ENCODE measurements at regions of chr5 and their contacts with region 1.

Region 1: GRCh38 chr5:133868946-133869518 is 99.4 kb downstream of the C5orf15 start:
- DNase-seq: peak; percentile 46 to 83 (median 72)
- ATAC-seq: peak; percentile 74
- H3K4me3 ChIP-seq: no peak overlapping the region
- H3K4me3 Mint-ChIP-seq: no peak overlapping the region
- H3K27ac ChIP-seq: no peak overlapping the region
- H3K27ac Mint-ChIP-seq: no peak overlapping the region
- H3K4me1 ChIP-seq: no peaks in the 10 kb centered on the region
- H3K4me1 Mint-ChIP-seq: peaks cover 4% of the 10 kb centered on the region
- H3K27me3 ChIP-seq: no peaks in the 10 kb centered on the region
- H3K27me3 Mint-ChIP-seq: peaks cover 15% of the 10 kb centered on the region
- CTCF ChIP-seq: peak; percentile 85

Region 2: GRCh38 chr5:133423618-133424282 is 445.3 kb before region 1 on chr5:
- CTCF ChIA-PET with region 1: interaction called, 59 read pairs
- POLR2A ChIA-PET with region 1: no interaction called
- intact Hi-C with region 1: loop called (anchors 1 kb)
- DNase-seq: peak; percentile 30 to 79 (median 67)
- ATAC-seq: peak; percentile 82
- H3K4me3 ChIP-seq: no peak overlapping the region
- H3K4me3 Mint-ChIP-seq: no peak overlapping the region
- H3K27ac ChIP-seq: no peak overlapping the region
- H3K27ac Mint-ChIP-seq: no peak overlapping the region
- H3K4me1 ChIP-seq: no peaks in the 10 kb centered on the region
- H3K4me1 Mint-ChIP-seq: peaks cover 5% of the 10 kb centered on the region
- H3K27me3 ChIP-seq: peaks cover 0 to 3% of the 10 kb centered on the region in 2 experiments
- H3K27me3 Mint-ChIP-seq: peaks cover 14% of the 10 kb centered on the region
- CTCF ChIP-seq: peak; percentile 84

Region 3: DNA sequence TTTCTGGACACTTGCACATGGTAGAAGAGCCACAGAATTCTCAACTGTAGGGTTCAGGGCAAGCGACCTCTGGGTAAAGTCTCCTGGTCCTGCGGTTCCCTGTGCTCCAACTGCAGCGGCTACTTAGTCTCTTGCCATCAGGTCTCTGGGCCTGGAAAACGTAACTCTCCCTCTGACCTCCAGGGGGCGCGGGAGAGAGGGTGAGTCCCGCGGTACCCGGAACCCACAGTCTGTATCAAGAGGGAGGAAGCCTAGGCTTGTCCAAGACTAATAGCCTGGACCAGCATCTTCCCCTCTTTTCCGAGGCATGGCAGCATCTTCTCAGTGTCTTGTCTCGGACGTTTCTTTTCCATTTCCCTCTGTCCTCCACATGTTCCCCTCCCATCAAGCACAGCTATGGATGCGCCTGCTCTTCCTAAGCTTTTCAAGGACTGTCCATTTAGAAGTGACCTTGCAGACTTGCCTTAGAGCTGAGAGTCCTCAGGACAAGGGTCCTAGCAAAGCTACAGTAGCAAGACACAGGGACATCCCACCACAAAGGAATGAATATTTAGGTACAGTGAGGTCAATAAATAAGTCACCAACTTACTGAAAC is 316.0 kb before region 1 on chr5:
- CTCF ChIA-PET with region 1: interaction called, 6 read pairs
- POLR2A ChIA-PET with region 1: no interaction called
- intact Hi-C with region 1: loop called in 1 of 2 experiments (anchors 1 kb)
- DNase-seq: peak; percentile 11 to 65 (median 49)
- ATAC-seq: no peak
- H3K4me3 ChIP-seq: no peak overlapping the region
- H3K4me3 Mint-ChIP-seq: no peak overlapping the region
- H3K27ac ChIP-seq: no peak overlapping the region
- H3K27ac Mint-ChIP-seq: no peak overlapping the region
- H3K4me1 ChIP-seq: no peaks in the 10 kb centered on the region
- H3K4me1 Mint-ChIP-seq: no peaks in the 10 kb centered on the region
- H3K27me3 ChIP-seq: peaks cover 0 to 3% of the 10 kb centered on the region in 2 experiments
- H3K27me3 Mint-ChIP-seq: peaks cover 28% of the 10 kb centered on the region
- CTCF ChIP-seq: peak; percentile 58

Region 4: GRCh38 chr5:133773247-133774202 is 95.5 kb before region 1 on chr5:
- CTCF ChIA-PET with region 1: no interaction called
- POLR2A ChIA-PET with region 1: no interaction called
- intact Hi-C with region 1: loop called in 1 of 2 experiments (anchors 5 kb)
- DNase-seq: peak in 1 of 9 experiments; percentile 21
- ATAC-seq: no peak
- H3K4me3 ChIP-seq: no peak overlapping the region
- H3K4me3 Mint-ChIP-seq: no peak overlapping the region
- H3K27ac ChIP-seq: no peak overlapping the region
- H3K27ac Mint-ChIP-seq: no peak overlapping the region
- H3K4me1 ChIP-seq: no peaks in the 10 kb centered on the region
- H3K4me1 Mint-ChIP-seq: no peaks in the 10 kb centered on the region
- H3K27me3 ChIP-seq: no peaks in the 10 kb centered on the region
- H3K27me3 Mint-ChIP-seq: peaks cover 7% of the 10 kb centered on the region
- CTCF ChIP-seq: no peak

Region 5: GRCh38 chr5:133881576-133882388 is 12.8 kb after region 1 on chr5:
- CTCF ChIA-PET with region 1: interaction called, 22 read pairs
- POLR2A ChIA-PET with region 1: no interaction called
- intact Hi-C with region 1: no loop called
- DNase-seq: no peak
- ATAC-seq: no peak
- H3K4me3 ChIP-seq: no peak overlapping the region
- H3K4me3 Mint-ChIP-seq: no peak overlapping the region
- H3K27ac ChIP-seq: no peak overlapping the region
- H3K27ac Mint-ChIP-seq: no peak overlapping the region
- H3K4me1 ChIP-seq: no peaks in the 10 kb centered on the region
- H3K4me1 Mint-ChIP-seq: no peaks in the 10 kb centered on the region
- H3K27me3 ChIP-seq: no peaks in the 10 kb centered on the region
- H3K27me3 Mint-ChIP-seq: peaks cover 8% of the 10 kb centered on the region
- CTCF ChIP-seq: no peak